GM13976 (cell line): ENCODE measurements at regions of chr3 and their contacts with region 1.

Region 1: GRCh38 chr3:154334973-154335420 is 10.7 kb upstream of the DHX36 start:
- DNase-seq: peak; percentile 9
- CTCF ChIP-seq: peak; percentile 13

Region 2: GRCh38 chr3:154132777-154133375 is 202.1 kb before region 1 on chr3:
- in situ Hi-C with region 1: no loop called
- DNase-seq: no peak
- CTCF ChIP-seq: no peak

Region 3: GRCh38 chr3:154464440-154465190 is 129.6 kb after region 1 on chr3:
- in situ Hi-C with region 1: no loop called
- DNase-seq: no peak
- CTCF ChIP-seq: no peak

Region 4: GRCh38 chr3:155334914-155335723 is 1000.1 kb after region 1 on chr3:
- in situ Hi-C with region 1: loop called (anchors 25 kb)
- DNase-seq: no peak
- CTCF ChIP-seq: no peak